ENCODE measurements at regions of chr9 and their contacts with region 1.

Region 1: DNA sequence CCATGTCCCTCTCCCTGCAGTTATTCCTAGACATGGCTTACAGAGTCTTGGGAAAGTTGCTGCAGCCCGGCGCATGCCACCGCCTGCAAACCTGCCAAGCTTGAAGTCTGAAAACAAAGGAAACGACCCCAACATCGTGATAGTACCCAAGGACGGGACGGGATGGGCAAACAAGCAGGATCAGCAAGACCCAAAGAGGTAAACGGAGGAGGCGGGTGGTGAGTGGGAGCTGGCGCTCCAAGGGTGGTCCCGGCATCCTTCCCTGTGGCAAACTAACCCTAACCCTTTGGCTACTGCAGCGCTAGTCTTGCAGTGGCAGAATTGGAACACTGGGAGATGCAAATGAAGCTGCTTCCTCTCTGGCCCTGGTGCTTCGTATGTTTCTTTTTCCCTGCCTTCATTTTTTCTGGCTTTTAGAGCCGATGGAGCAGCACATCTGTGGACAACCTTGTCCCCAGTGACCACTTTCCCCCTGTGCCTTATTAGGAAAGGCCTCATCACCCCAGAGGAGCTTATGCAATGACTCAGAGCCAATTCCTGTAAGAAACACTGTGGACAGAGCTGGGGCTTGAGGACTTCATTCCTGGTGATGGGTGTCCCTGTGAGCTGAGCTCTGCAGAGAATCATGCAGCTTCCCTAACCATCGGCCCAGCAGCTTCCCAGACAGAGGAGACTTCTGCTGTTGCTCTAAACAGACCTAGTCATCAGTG is 38.9 kb downstream of the PRRC2B start:
- DNase-seq: no peak
- ATAC-seq: peak in 3 of 4 donors; percentile 44 to 60 (median 55)
- H3K4me3 ChIP-seq: no peak overlapping the region
- H3K27ac ChIP-seq: peak overlapping the region in 6 of 12 donors; percentile 4 to 57 (median 35)
- H3K4me1 ChIP-seq: peaks cover 0 to 71% (median 45%) of the 10 kb centered on the region in 12 donors
- H3K27me3 ChIP-seq: no peaks in the 10 kb centered on the region
- CTCF ChIP-seq: no peak
- POLR2A ChIP-seq: no peak

Region 2: DNA sequence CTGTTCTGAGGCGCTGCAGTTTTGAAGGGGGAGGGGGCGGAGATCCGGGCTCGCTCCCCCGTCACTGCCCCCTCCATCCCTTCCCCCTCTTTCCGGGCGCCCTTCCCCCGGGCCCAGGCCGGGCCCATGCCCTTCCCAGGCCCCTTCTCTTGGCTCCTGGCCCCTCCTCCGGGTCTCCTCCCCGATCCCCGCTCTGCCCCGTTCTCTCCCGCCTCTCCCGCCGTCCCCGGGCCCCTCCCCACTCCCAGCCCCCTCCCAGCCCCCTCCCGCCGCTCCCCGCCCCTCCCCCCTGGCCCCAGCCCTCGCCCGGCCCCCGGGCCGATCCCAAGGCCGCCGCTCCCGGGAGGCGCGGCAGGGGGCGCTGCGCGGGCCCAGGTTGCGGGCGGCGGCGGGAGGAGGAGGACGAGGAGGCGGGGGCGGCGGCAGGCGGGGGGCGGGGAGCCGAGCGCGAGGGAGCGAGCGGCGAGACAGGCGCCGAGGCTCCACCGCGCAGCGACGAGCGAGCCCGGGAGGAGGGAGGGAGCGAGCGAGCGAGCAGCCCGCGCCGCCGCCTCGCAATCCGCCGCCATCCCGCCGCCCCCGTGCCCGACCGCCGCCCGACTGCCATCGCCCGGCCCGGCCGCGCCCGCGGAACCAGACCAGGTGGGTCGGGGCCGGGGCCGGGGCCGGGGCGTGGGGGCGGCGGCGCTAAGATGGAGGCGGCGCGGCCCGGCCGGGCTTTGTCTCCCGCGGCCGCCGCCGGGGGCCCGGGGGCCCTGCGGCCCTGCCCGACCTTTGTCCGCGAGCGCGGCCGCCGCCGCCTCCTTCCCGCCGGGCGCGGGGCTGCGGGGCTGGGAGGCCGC is 38.9 kb before region 1 on chr9 and contains the start of gene PRRC2B:
- intact Hi-C with region 1: loop called in 2 of 10 experiments (anchors 5 kb)
- DNase-seq: peak; percentile 87 to 94 (median 91)
- ATAC-seq: peak; percentile 51 to 91 (median 78)
- H3K4me3 ChIP-seq: peak within 1 kb of the TSS; percentile 58 to 96 (median 80)
- H3K27ac ChIP-seq: peak within 1 kb of the TSS; percentile 91 to 99 (median 96)
- H3K4me1 ChIP-seq: peaks cover 8 to 51% (median 41%) of the 10 kb centered on the region in 12 donors
- H3K27me3 ChIP-seq: no peaks in the 10 kb centered on the region
- CTCF ChIP-seq: peak in 11 of 12 donors; percentile 6 to 84 (median 65)
- POLR2A ChIP-seq: peak in 1 of 2 donors; percentile 26
- total RNA-seq, gene PRRC2B: 88.2 to 193 (median 126) TPM

Measured in heart left ventricle (tissue), 16 donors.